ENCODE measurements at regions of chr9 and their contacts with region 1.

Region 1: DNA sequence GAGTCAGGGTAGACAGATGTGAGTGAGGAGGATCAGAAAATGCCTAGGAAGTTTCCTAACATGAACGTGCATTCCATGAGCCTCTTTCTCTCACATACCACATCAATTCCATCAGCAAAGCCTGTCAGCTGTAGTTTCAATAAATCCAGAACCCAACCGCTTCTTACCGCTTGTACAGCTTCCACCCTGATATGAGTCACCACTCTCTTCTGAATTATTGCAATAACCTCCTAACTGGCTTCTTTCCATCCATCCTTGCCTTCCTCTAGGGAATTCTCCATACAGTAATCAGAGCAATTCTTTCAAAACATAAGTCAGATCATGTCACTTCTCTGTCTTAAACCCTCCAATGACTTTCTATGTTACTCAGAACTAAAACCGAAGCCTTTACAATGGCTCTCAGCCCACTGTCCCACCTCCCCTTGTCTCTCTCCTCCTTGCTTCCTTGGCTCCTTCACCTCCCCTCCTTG is 8.1 kb upstream of the RAD23B start:
- DNase-seq: peak; percentile 27
- ATAC-seq: peak; percentile 88
- H3K4me3 ChIP-seq: no peak overlapping the region
- H3K27ac ChIP-seq: peak overlapping the region; percentile 48; the same call in 1 of the 2 replicates
- H3K4me1 ChIP-seq: peaks cover 2% of the 10 kb centered on the region
- H3K27me3 ChIP-seq: no peaks in the 10 kb centered on the region
- CTCF ChIP-seq: no peak

Region 2: DNA sequence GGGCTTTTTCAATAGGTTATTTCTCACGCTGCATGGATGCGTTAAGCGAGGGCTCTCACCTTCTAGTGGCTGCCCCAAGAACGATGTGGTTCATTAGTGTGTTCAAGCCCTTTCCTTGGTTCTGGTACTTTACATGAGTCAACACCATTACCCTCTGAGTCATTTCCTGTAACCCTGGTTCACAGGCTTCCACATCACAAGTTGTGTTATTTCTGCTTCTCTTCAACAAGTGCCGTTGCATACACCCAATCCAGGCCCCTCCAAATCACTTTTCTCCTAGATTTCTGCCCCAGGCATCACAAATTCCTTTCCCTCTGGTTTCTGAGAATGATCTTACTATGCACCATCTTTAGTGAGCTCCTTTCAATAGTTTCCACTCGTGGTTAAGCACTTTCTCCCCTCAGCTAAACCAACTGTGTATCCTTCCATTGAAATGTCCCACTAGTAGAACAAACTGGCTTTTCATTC is 61.4 kb before region 1 on chr9:
- CTCF ChIA-PET with region 1: no interaction called
- POLR2A ChIA-PET with region 1: no interaction called
- in situ Hi-C with region 1: no loop called
- intact Hi-C with region 1: loop called (anchors 10 kb)
- DNase-seq: peak; percentile 33
- ATAC-seq: peak; percentile 82
- H3K4me3 ChIP-seq: no peak overlapping the region
- H3K27ac ChIP-seq: no peak overlapping the region
- H3K4me1 ChIP-seq: no peaks in the 10 kb centered on the region
- H3K27me3 ChIP-seq: no peaks in the 10 kb centered on the region
- CTCF ChIP-seq: no peak

Region 3: GRCh38 chr9:107363516-107364152 is 88.6 kb after region 1 on chr9:
- CTCF ChIA-PET with region 1: no interaction called
- POLR2A ChIA-PET with region 1: no interaction called
- in situ Hi-C with region 1: no loop called
- intact Hi-C with region 1: no loop called
- DNase-seq: no peak
- ATAC-seq: no peak
- H3K4me3 ChIP-seq: no peak overlapping the region
- H3K27ac ChIP-seq: no peak overlapping the region
- H3K4me1 ChIP-seq: no peaks in the 10 kb centered on the region
- H3K27me3 ChIP-seq: no peaks in the 10 kb centered on the region
- CTCF ChIP-seq: no peak

Measured in Panc1 (cell line).